Posterior vena cava (tissue), 2 donors: ENCODE measurements at regions of chr3 and their contacts with region 1.

Region 1: GRCh38 chr3:153944084-153944483 is 177.1 kb upstream of the ARHGEF26 start:
- DNase-seq: no peak

Region 2: GRCh38 chr3:153818338-153818737 is 125.7 kb before region 1 on chr3:
- intact Hi-C with region 1: loop called in 1 of 2 experiments (anchors 5 kb)
- DNase-seq: no peak